Activated T-helper 1 cell treated with anti-CD3 and anti-CD28 coated beads, Interleukin-12 subunit alpha, Interleukin-12 subunit beta, Interleukin-2, Interleukin-4 antibody, amounts not matched to agents 30 ng/mL and 10 ng/mL and 1 ng/mL, durations not matched to agents 14 hours and 24 hours and 36 hours (primary cell): ENCODE measurements at regions of chr12 and their contacts with region 1.

Region 1: GRCh38 chr12:65169320-65170208 is at the start of gene LEMD3:
- DNase-seq: peak; percentile 91
- H3K4me3 Mint-ChIP-seq: peak within 1 kb of the TSS; percentile 99
- H3K27ac Mint-ChIP-seq: peak within 1 kb of the TSS; percentile 94
- H3K4me1 Mint-ChIP-seq: peaks cover 7% of the 10 kb centered on the region
- H3K27me3 Mint-ChIP-seq: peaks cover 5% of the 10 kb centered on the region
- total RNA-seq, gene LEMD3: 26.5 and 34.6 TPM in 2 replicates

Region 2: GRCh38 chr12:64222009-64222765 is 947.4 kb before region 1 on chr12 and contains the start of gene KICS2:
- intact Hi-C with region 1: loop called (anchors 10 kb)
- DNase-seq: peak; percentile 88
- H3K4me3 Mint-ChIP-seq: peak within 1 kb of the TSS; percentile 100
- H3K27ac Mint-ChIP-seq: peak within 1 kb of the TSS; percentile 100
- H3K4me1 Mint-ChIP-seq: peaks cover 33% of the 10 kb centered on the region
- H3K27me3 Mint-ChIP-seq: peaks cover 14% of the 10 kb centered on the region
- total RNA-seq, gene KICS2: 12.7 and 14.9 TPM in 2 replicates

Region 3: GRCh38 chr12:64451687-64452558 is 717.6 kb before region 1 on chr12 and contains the start of gene TBK1:
- intact Hi-C with region 1: loop called (anchors 2 kb)
- DNase-seq: peak; percentile 74
- H3K4me3 Mint-ChIP-seq: peak within 1 kb of the TSS; percentile 97
- H3K27ac Mint-ChIP-seq: peak within 1 kb of the TSS; percentile 94
- H3K4me1 Mint-ChIP-seq: peaks cover 47% of the 10 kb centered on the region
- H3K27me3 Mint-ChIP-seq: no peaks in the 10 kb centered on the region
- total RNA-seq, gene TBK1: 33.6 and 42.4 TPM in 2 replicates

Region 4: DNA sequence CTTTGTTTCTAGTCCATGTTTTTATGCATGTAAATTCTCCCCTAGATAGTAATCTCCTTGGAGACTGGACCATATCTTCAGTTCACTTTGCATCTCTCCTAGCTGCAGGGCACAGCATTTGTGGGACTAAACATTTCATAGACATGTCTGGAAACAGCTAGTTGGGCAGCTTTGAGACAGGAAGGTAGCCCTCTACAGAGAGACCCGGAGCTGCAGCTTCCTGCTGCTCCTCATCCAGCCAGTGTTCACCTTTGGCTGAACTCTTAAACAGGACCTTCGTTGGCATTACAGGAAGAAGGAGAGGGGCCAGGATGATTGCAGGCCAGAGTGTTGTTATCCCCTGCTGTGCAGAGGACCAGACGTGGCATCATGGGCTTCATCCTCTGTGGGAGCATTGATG is 463.3 kb before region 1 on chr12:
- intact Hi-C with region 1: no loop called
- DNase-seq: no peak
- H3K4me3 Mint-ChIP-seq: no peak overlapping the region
- H3K27ac Mint-ChIP-seq: no peak overlapping the region
- H3K4me1 Mint-ChIP-seq: peaks cover 3% of the 10 kb centered on the region
- H3K27me3 Mint-ChIP-seq: no peaks in the 10 kb centered on the region

Region 5: GRCh38 chr12:65121049-65121955 is 48.3 kb before region 1 on chr12 and contains the start of gene WIF1:
- intact Hi-C with region 1: loop called (anchors 5 kb)
- DNase-seq: no peak
- H3K4me3 Mint-ChIP-seq: peak within 1 kb of the TSS; percentile 46
- H3K27ac Mint-ChIP-seq: no peak within 1 kb of the TSS
- H3K4me1 Mint-ChIP-seq: no peaks in the 10 kb centered on the region
- H3K27me3 Mint-ChIP-seq: peaks cover 30% of the 10 kb centered on the region
- total RNA-seq, gene WIF1: not detected in 2 replicates

Region 6: DNA sequence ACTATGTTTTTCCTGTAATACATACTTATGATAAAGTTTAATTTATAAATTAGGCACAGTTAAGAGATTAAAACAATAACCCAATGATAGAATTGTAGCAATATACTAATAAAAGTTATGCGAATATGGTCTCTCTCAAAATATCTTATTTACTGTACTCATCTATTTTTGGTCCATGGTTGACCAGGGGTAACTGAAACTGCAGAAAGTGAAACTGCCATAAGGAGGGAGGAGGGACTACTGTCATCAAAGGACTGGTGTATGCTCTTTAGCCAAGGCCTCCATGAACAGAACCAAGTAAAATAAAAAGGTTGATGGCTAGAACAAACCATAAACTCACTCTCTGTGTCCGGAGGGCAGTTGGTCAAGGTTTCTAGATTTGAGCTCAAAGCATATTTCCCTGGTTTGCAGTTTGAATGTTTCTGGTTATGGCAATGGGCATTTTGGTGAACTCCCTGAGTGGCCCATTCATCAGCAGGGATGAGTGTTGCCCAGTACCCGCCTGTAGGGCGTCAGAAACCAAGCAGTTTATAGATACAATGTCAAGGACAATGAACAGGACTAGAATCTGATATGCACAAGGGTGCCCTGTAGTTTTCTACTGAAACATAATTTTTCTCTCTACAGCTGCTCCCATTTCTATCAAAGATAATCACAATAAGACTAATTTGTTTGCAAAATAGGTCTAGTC is 19.6 kb after region 1 on chr12:
- intact Hi-C with region 1: loop called (anchors 2 kb)
- DNase-seq: no peak
- H3K4me3 Mint-ChIP-seq: no peak overlapping the region
- H3K27ac Mint-ChIP-seq: no peak overlapping the region
- H3K4me1 Mint-ChIP-seq: peaks cover 71% of the 10 kb centered on the region
- H3K27me3 Mint-ChIP-seq: no peaks in the 10 kb centered on the region

Region 7: GRCh38 chr12:65232476-65233077 is 63.0 kb after region 1 on chr12:
- intact Hi-C with region 1: loop called (anchors 1 kb)
- DNase-seq: no peak
- H3K4me3 Mint-ChIP-seq: no peak overlapping the region
- H3K27ac Mint-ChIP-seq: no peak overlapping the region
- H3K4me1 Mint-ChIP-seq: peaks cover 15% of the 10 kb centered on the region
- H3K27me3 Mint-ChIP-seq: no peaks in the 10 kb centered on the region

Region 8: GRCh38 chr12:66130277-66131066 is 960.9 kb after region 1 on chr12 and contains the start of gene LLPH:
- intact Hi-C with region 1: loop called (anchors 1 kb)
- DNase-seq: peak; percentile 86
- H3K4me3 Mint-ChIP-seq: peak within 1 kb of the TSS; percentile 98
- H3K27ac Mint-ChIP-seq: peak within 1 kb of the TSS; percentile 93
- H3K4me1 Mint-ChIP-seq: peaks cover 57% of the 10 kb centered on the region
- H3K27me3 Mint-ChIP-seq: no peaks in the 10 kb centered on the region
- total RNA-seq, gene LLPH: 31.3 and 33.6 TPM in 2 replicates